H1 (cell line): ENCODE measurements at regions of chr1 and their contacts with region 1.

Region 1: GRCh38 chr1:151024540-151025146 is 11.7 kb upstream of the BNIPL start:
- DNase-seq: peak; percentile 73 to 94
- H3K4me3 ChIP-seq: no peak overlapping the region
- H3K27ac ChIP-seq: no peak overlapping the region
- H3K4me1 ChIP-seq: no peaks in the 10 kb centered on the region
- H3K27me3 ChIP-seq: no peaks in the 10 kb centered on the region
- CTCF ChIP-seq: peak; percentile 87 to 95 (median 94)
- EP300 ChIP-seq: no peak
- POLR2A ChIP-seq: no peak
- RAD21 ChIP-seq: peak; percentile 87 to 93

Region 2: GRCh38 chr1:150925816-150926741 is 98.6 kb before region 1 on chr1 and contains the start of gene SETDB1:
- CTCF ChIA-PET with region 1: no interaction called
- POLR2A ChIA-PET with region 1: no interaction called
- DNase-seq: peak; percentile 96 to 98
- H3K4me3 ChIP-seq: peak within 1 kb of the TSS; percentile 87 to 92 (median 90)
- H3K27ac ChIP-seq: peak within 1 kb of the TSS; percentile 90
- H3K4me1 ChIP-seq: peaks cover 0 to 4% (median 0%) of the 10 kb centered on the region in 4 experiments; a peak in 2 of 7 replicates
- H3K27me3 ChIP-seq: no peaks in the 10 kb centered on the region
- CTCF ChIP-seq: no peak
- EP300 ChIP-seq: peak in 1 of 2 experiments; percentile 69; a peak in 1 of 3 replicates
- POLR2A ChIP-seq: peak in 1 of 2 experiments; percentile 82; a peak in 2 of 3 replicates
- RAD21 ChIP-seq: no peak; a peak in 1 of 4 replicates
- total RNA-seq, gene SETDB1: 48.8 and 49.9 TPM in 2 replicates

Region 3: DNA sequence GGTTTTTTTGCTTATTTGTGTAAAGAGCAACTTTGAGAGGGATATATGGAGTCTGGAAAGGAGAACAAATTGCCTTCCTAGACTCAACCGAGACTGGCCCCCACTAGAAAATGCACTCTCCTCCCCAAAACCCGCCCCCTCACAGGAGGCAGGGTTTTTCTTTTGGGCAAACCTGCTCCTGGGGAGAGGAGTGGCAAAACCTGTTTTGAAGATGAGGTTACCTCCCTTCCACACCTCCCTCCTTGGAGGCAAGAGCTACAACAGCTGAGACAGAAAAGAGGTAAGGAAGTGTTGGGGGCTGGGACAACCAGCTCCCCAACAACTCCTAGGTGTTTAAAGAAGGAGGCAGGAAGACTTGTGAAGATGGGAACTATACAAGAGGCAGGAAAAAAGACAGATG is 11.7 kb after region 1 on chr1 and contains the start of gene BNIPL:
- CTCF ChIA-PET with region 1: interaction called, 17 read pairs
- POLR2A ChIA-PET with region 1: no interaction called
- DNase-seq: no peak
- H3K4me3 ChIP-seq: peak within 1 kb of the TSS in 2 of 4 experiments; percentile 12 to 41; a peak in 3 of 8 replicates
- H3K27ac ChIP-seq: no peak within 1 kb of the TSS
- H3K4me1 ChIP-seq: peaks cover 0 to 3% (median 0%) of the 10 kb centered on the region in 4 experiments; a peak in 3 of 7 replicates
- H3K27me3 ChIP-seq: no peaks in the 10 kb centered on the region
- CTCF ChIP-seq: no peak
- EP300 ChIP-seq: no peak
- POLR2A ChIP-seq: no peak
- RAD21 ChIP-seq: no peak
- total RNA-seq, gene BNIPL: 2.3 and 2.4 TPM in 2 replicates

Region 4: DNA sequence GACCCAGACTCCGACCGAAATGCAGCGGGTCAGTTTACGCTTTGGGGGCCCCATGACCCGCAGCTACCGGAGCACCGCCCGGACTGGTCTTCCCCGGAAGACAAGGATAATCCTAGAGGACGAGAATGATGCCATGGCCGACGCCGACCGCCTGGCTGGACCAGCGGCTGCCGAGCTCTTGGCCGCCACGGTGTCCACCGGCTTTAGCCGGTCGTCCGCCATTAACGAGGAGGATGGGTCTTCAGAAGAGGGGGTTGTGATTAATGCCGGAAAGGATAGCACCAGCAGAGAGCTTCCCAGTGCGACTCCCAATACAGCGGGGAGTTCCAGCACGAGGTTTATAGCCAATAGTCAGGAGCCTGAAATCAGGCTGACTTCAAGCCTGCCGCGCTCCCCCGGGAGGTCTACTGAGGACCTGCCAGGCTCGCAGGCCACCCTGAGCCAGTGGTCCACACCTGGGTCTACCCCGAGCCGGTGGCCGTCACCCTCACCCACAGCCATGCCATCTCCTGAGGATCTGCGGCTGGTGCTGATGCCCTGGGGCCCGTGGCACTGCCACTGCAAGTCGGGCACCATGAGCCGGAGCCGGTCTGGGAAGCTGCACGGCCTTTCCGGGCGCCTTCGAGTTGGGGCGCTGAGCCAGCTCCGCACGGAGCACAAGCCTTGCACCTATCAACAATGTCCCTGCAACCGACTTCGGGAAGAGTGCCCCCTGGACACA is 23.4 kb after region 1 on chr1:
- CTCF ChIA-PET with region 1: interaction called, 29 read pairs
- POLR2A ChIA-PET with region 1: interaction called, 14 read pairs
- DNase-seq: peak in 1 of 2 experiments; percentile 85
- H3K4me3 ChIP-seq: peak overlapping the region; percentile 70 to 96 (median 84)
- H3K27ac ChIP-seq: peak overlapping the region; percentile 60
- H3K4me1 ChIP-seq: peaks cover 0 to 7% (median 3%) of the 10 kb centered on the region in 4 experiments; a peak in 4 of 7 replicates
- H3K27me3 ChIP-seq: no peaks in the 10 kb centered on the region
- CTCF ChIP-seq: peak; percentile 73 to 84 (median 82)
- EP300 ChIP-seq: no peak
- POLR2A ChIP-seq: peak; percentile 53 to 79
- RAD21 ChIP-seq: peak in 1 of 2 experiments; percentile 23; a peak in 2 of 4 replicates

Region 5: GRCh38 chr1:151070474-151071276 is 46.0 kb after region 1 on chr1 and contains the start of gene GABPB2:
- CTCF ChIA-PET with region 1: interaction called, 11 read pairs
- POLR2A ChIA-PET with region 1: interaction called, 4 read pairs
- DNase-seq: peak; percentile 77 to 98
- H3K4me3 ChIP-seq: peak within 1 kb of the TSS; percentile 83 to 94 (median 92)
- H3K27ac ChIP-seq: peak within 1 kb of the TSS; percentile 98
- H3K4me1 ChIP-seq: peaks cover 0 to 4% (median under 1%) of the 10 kb centered on the region in 4 experiments; a peak in 1 of 7 replicates
- H3K27me3 ChIP-seq: no peaks in the 10 kb centered on the region
- CTCF ChIP-seq: peak; percentile 80 to 90 (median 83)
- EP300 ChIP-seq: 0 out of 3 replicates have a peak, but pooled peaks of 1 of the 2 experiments have one; percentile 19
- POLR2A ChIP-seq: peak; percentile 74 to 78; a peak in 1 of 3 replicates
- RAD21 ChIP-seq: peak; percentile 61 to 63
- total RNA-seq, gene GABPB2: 1.9 and 2.4 TPM in 2 replicates